ENCODE measurements at regions of chr1 and their contacts with region 1.

Region 1: DNA sequence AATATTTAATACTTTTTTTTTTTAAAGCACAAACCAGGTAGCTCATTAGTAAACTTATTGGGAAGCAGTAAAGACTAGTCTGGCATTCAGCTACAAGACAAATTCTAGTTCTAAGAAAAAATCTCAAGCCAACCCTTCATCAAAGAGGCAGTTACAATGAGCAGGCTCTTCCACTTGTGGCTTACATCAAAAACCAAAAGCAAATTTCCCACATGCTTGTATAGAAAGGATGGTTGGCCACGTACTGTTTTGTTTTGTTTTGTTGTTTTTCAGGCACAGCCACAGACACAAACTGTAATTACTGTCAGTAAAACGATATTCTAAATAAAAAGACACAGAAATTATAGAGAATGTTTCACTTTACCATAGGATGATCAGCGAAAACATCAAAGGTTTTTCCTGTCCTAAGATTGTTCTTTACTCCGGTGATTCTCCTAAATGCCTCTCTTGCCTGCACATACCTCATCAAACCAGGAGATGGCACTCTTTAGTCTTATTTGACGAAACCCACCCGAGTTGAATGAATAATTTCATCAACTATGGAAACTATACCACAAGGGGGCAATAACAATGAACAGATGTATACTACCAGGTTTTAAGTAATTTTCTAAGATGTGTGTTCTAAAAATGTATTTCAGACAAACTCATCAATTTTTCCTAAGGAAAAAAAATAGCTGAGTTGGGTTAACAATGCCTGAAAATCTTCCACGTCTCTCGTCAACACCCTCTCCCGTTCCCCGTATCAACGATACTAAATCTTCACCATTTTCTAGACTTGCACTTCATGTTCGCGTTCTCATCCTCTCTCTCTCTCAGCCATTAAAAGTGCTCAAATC is 26.9 kb downstream of the RPL5 start:
- DNase-seq: no peak

Region 2: DNA sequence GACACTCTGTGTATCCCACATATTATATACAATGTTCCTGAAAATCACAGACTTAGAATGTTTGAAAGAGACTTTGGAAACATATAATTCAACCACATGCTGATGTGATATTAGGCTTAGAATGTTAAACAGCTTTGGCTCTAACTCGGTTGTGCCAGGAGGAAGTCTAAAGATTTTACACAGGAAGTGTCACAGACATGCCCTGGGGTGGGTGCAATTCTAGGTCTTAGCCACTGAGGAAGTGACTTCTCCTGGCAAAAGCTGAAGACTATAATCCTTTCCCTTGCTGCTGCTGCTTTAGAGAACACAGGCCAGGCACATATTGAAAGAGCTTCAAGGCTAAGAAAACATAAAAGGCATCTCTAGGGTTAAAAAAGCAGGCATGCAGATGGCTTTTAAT is 24.0 kb after region 1 on chr1:
- intact Hi-C with region 1: no loop called
- DNase-seq: no peak

Region 3: DNA sequence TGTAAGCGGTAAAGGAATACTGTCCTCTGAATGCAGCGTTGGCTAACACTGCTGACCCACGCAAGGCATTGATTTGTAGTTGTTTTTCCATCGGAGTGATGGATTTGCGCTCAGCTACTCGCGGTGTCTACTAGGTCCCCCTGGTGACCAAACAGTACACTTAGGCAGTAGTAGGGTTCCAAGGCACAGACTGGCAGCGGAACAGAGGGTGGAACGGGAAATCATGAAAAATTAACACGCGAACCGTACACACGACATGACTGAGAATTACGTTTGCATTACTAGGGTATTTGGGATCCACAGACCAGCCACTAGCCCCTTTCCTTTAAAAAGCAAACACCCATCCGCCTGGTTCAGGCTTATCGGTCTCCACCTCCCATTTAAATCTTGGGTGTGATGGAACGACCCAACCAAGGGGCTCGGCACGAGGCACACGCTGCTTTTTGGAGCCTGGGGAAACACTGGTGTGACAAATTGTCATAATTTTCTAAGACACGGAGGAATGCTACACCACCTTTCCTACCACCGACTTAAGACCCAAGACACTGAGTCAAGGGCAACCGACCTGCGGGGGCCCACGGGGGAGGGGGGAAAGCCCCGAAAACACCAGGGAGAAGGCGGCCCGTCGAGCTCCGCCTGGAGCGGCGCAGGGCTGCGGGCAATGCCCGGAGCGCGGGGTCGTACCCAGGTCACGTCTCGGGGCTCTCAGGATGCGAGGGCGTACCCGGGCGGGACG is 101.8 kb after region 1 on chr1:
- intact Hi-C with region 1: loop called (anchors 10 kb)
- DNase-seq: peak; percentile 84

Region 4: DNA sequence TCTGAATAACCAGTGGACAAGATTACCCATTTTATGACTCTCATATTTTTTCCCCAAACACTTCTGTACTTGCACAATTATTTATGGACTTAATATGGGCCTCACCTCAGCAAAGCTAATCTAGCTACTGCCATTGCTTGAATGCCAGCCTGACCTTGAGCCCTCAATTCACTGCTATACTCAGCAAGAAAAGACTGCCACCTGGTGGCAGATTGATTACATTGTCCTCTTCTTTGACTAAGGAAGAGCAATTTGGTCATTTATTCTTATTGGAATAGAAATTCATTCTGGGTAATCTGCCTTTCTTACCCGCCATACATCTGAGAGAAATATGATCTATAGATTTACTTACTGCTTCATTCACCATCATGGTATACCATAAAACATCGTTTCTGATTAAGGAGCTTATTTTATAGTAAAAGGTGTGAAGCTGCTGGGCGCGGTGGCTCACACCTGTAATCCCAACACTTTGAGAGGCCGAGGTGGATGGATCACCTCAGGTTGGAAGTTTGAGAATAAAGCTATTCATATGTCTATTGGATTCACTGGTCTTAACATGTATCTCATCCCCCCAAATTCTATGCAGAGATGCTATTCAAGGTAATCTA is 135.4 kb after region 1 on chr1:
- intact Hi-C with region 1: loop called (anchors 2 to 5 kb)
- DNase-seq: no peak

Region 5: GRCh38 chr1:94614996-94615395 is 1756.2 kb after region 1 on chr1:
- intact Hi-C with region 1: loop called in 1 of 2 experiments (anchors 5 kb)
- DNase-seq: no peak

Measured in posterior vena cava (tissue), 2 donors.